CD8-positive, alpha-beta T cell (primary cell): ENCODE measurements at regions of chr6 and their contacts with region 1.

Region 1: GRCh38 chr6:99425647-99426453 is 742 bp upstream of the PNISR start:
- DNase-seq: peak in 8 of 9 experiments; percentile 16 to 81 (median 58)
- ATAC-seq: peak; percentile 41
- H3K4me3 ChIP-seq: peak overlapping the region; percentile 97
- H3K4me3 Mint-ChIP-seq: peak overlapping the region; percentile 99
- H3K27ac ChIP-seq: peak overlapping the region; percentile 98 to 99
- H3K27ac Mint-ChIP-seq: peak overlapping the region; percentile 100
- H3K4me1 ChIP-seq: peaks cover 41% of the 10 kb centered on the region
- H3K4me1 Mint-ChIP-seq: peaks cover 55% of the 10 kb centered on the region
- H3K27me3 ChIP-seq: no peaks in the 10 kb centered on the region
- H3K27me3 Mint-ChIP-seq: no peaks in the 10 kb centered on the region
- CTCF ChIP-seq: no peak

Region 2: DNA sequence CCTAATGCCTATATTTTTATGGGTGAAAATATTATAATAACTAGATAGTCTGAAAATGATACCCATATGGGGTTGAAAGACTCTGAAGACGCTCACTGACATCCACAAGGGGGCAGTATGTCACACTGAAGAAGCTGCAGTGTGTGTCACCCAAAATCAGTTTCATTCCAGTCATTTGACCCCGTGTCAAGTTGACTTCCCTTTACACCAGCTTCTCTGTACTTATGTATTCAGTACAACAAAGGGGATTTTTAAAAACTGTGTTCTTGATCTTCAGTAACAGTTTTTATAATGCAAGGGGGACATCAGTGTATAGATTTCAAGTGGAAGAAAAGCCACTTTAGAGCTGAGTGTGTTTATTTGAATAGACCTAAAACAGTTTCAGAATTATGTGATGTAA is 95.7 kb before region 1 on chr6:
- CTCF ChIA-PET with region 1: interaction called, 9 read pairs
- POLR2A ChIA-PET with region 1: no interaction called
- intact Hi-C with region 1: loop called in 1 of 2 experiments (anchors 1 kb)
- DNase-seq: peak; percentile 12 to 72 (median 42)
- ATAC-seq: peak; percentile 64
- H3K4me3 ChIP-seq: no peak overlapping the region
- H3K4me3 Mint-ChIP-seq: no peak overlapping the region
- H3K27ac ChIP-seq: no peak overlapping the region
- H3K27ac Mint-ChIP-seq: no peak overlapping the region
- H3K4me1 ChIP-seq: no peaks in the 10 kb centered on the region
- H3K4me1 Mint-ChIP-seq: peaks cover 2% of the 10 kb centered on the region
- H3K27me3 ChIP-seq: no peaks in the 10 kb centered on the region
- H3K27me3 Mint-ChIP-seq: no peaks in the 10 kb centered on the region
- CTCF ChIP-seq: peak; percentile 85

Region 3: DNA sequence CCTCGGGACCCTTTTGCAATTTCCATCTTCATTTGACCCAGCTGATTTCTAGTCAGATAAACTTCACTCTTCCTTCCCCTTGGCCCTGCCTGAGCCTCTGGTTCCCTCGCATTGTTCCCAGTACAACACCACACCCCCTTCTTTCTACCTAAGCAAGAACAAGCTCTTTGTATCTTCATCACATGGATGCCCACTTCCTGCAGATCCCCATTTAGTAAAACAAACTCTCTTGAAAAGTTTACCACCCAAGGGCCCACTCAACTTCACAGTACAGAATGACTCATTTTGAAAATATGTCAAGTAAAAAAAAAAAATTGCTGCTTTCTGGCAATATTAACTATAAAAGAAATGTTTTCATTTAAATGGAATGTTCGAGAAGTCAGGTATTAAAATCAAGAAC is 81.6 kb before region 1 on chr6:
- CTCF ChIA-PET with region 1: no interaction called
- POLR2A ChIA-PET with region 1: no interaction called
- intact Hi-C with region 1: no loop called
- DNase-seq: no peak
- ATAC-seq: no peak
- H3K4me3 ChIP-seq: no peak overlapping the region
- H3K4me3 Mint-ChIP-seq: no peak overlapping the region
- H3K27ac ChIP-seq: no peak overlapping the region
- H3K27ac Mint-ChIP-seq: no peak overlapping the region
- H3K4me1 ChIP-seq: no peaks in the 10 kb centered on the region
- H3K4me1 Mint-ChIP-seq: peaks cover 2% of the 10 kb centered on the region
- H3K27me3 ChIP-seq: peaks cover 0 to 5% of the 10 kb centered on the region in 2 experiments
- H3K27me3 Mint-ChIP-seq: peaks cover 29% of the 10 kb centered on the region
- CTCF ChIP-seq: no peak

Region 4: DNA sequence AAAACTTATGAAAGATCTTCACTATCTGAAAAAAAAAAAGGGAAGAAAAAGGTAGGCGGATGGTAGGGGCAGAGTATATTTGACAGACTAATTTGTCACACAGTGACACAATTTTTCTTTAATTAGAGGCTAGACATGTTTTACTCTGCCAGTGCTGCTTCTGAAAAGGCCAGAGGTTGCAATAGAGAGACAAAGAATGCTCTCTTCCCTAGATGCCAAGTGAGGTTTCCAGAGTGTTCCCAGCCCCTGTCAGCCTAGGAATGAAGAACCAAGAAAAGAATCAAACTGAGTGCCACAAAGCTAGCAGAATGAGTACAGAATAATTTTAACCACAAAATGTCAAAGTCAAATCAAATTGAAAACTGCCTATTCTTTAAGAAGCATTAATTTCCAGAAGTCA is 13.8 kb before region 1 on chr6:
- CTCF ChIA-PET with region 1: no interaction called
- POLR2A ChIA-PET with region 1: interaction called, 6 read pairs
- intact Hi-C with region 1: loop called (anchors 1 kb)
- DNase-seq: no peak
- ATAC-seq: no peak
- H3K4me3 ChIP-seq: no peak overlapping the region
- H3K4me3 Mint-ChIP-seq: no peak overlapping the region
- H3K27ac ChIP-seq: no peak overlapping the region
- H3K27ac Mint-ChIP-seq: no peak overlapping the region
- H3K4me1 ChIP-seq: peaks cover 25% of the 10 kb centered on the region
- H3K4me1 Mint-ChIP-seq: peaks cover 45% of the 10 kb centered on the region
- H3K27me3 ChIP-seq: no peaks in the 10 kb centered on the region
- H3K27me3 Mint-ChIP-seq: no peaks in the 10 kb centered on the region
- CTCF ChIP-seq: no peak

Region 5: DNA sequence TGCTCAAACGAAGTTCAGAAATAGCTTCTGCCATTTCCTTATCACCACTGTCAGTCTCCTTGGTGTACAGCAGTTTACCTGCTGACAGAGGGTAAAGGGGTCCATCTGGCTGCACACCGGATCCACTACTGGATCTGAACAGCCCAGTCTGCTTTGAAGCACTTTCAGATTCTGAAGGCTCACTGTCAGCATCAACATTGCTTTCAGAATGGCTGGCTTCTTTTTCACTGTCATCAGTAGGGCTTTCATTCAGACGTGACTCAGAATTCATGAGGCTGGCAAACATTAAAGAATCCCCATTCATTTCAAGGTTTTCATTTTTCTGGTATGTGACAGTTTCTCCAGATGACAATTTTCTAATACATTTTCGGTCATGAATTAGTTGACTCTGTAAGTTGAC is 20.2 kb after region 1 on chr6:
- CTCF ChIA-PET with region 1: no interaction called
- POLR2A ChIA-PET with region 1: no interaction called
- intact Hi-C with region 1: no loop called
- DNase-seq: no peak
- ATAC-seq: no peak
- H3K4me3 ChIP-seq: no peak overlapping the region
- H3K4me3 Mint-ChIP-seq: no peak overlapping the region
- H3K27ac ChIP-seq: no peak overlapping the region
- H3K27ac Mint-ChIP-seq: no peak overlapping the region
- H3K4me1 ChIP-seq: no peaks in the 10 kb centered on the region
- H3K4me1 Mint-ChIP-seq: no peaks in the 10 kb centered on the region
- H3K27me3 ChIP-seq: no peaks in the 10 kb centered on the region
- H3K27me3 Mint-ChIP-seq: no peaks in the 10 kb centered on the region
- CTCF ChIP-seq: no peak

Region 6: DNA sequence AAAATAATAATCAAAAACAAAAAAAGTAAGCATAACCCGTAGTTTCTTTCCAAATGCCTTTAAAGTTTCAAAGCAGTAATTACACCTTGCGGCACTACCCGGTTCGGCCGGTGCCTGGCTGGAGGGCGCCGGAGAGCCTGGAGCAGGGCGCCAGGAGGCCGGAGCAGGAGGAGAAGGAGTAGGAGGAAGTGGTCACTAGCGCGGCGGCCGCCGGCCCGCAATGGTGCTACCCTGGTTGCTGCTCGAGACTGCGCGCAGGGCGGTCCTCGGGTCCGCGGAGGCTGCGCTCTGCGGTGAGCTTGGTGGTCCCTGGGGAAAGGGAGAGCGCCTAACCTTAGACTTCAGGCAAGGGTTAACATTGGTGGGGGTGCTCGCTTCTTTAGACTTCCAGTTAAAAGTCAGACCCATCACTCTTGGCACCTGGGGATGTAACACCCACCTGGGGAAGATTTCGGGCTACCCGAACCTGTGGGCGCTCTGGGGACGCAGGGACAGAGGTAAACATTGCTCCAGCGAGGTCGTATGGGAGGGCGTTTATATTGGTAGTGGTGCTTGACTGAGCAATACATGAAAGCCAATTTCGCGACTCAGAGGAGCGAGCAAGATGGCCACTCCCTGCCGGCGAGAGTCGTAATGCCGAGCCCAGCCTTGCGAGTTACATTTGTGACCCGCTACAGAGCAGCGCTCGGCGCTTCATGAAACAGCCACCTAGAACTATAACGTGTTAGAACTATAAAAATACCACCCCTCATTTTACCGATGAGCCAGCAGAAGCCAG is 95.2 kb after region 1 on chr6:
- CTCF ChIA-PET with region 1: interaction called, 3 read pairs
- POLR2A ChIA-PET with region 1: no interaction called
- intact Hi-C with region 1: loop called (anchors 1 to 5 kb)
- DNase-seq: peak; percentile 37 to 83 (median 66)
- ATAC-seq: peak; percentile 91
- H3K4me3 ChIP-seq: peak overlapping the region; percentile 79 to 94
- H3K4me3 Mint-ChIP-seq: peak overlapping the region; percentile 96
- H3K27ac ChIP-seq: peak overlapping the region; percentile 48 to 74
- H3K27ac Mint-ChIP-seq: peak overlapping the region; percentile 92
- H3K4me1 ChIP-seq: peaks cover 12% of the 10 kb centered on the region
- H3K4me1 Mint-ChIP-seq: peaks cover 41% of the 10 kb centered on the region
- H3K27me3 ChIP-seq: no peaks in the 10 kb centered on the region
- H3K27me3 Mint-ChIP-seq: no peaks in the 10 kb centered on the region
- CTCF ChIP-seq: peak; percentile 89

Region 7: DNA sequence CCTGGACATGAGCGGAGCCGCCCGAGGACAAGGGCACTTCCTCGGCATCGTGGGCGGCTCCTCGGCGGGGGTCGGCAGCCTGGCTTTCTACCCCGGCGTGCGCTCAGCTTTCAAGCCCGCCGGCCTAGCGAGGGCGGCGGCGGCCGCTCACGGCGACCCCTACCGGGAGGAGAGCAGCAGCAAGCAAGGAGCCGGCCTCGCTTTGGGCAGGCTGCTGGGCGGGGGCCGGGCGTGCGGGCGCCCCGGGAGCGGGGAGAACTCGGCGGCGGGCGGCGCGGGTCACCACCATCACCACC is 187.5 kb after region 1 on chr6:
- CTCF ChIA-PET with region 1: no interaction called
- POLR2A ChIA-PET with region 1: no interaction called
- intact Hi-C with region 1: loop called in 1 of 2 experiments (anchors 2 kb)
- DNase-seq: peak in 3 of 9 experiments; percentile 34 to 61 (median 56)
- ATAC-seq: peak; percentile 30
- H3K4me3 ChIP-seq: peak overlapping the region; percentile 13 to 18
- H3K4me3 Mint-ChIP-seq: no peak overlapping the region
- H3K27ac ChIP-seq: no peak overlapping the region
- H3K27ac Mint-ChIP-seq: no peak overlapping the region
- H3K4me1 ChIP-seq: peaks cover 18% of the 10 kb centered on the region
- H3K4me1 Mint-ChIP-seq: peaks cover 28% of the 10 kb centered on the region
- H3K27me3 ChIP-seq: peaks cover 52 to 54% of the 10 kb centered on the region in 2 experiments
- H3K27me3 Mint-ChIP-seq: peaks cover 81% of the 10 kb centered on the region
- CTCF ChIP-seq: no peak